ENCODE measurements at regions of chr9 and their contacts with region 1.

Region 1: GRCh38 chr9:70639853-70640814 is 225.7 kb upstream of the KLF9 start:
- DNase-seq: peak; percentile 18
- H3K4me3 ChIP-seq: no peak overlapping the region
- H3K27ac ChIP-seq: no peak overlapping the region
- H3K27me3 ChIP-seq: peaks cover 5% of the 10 kb centered on the region
- CTCF ChIP-seq: peak; percentile 69

Region 2: DNA sequence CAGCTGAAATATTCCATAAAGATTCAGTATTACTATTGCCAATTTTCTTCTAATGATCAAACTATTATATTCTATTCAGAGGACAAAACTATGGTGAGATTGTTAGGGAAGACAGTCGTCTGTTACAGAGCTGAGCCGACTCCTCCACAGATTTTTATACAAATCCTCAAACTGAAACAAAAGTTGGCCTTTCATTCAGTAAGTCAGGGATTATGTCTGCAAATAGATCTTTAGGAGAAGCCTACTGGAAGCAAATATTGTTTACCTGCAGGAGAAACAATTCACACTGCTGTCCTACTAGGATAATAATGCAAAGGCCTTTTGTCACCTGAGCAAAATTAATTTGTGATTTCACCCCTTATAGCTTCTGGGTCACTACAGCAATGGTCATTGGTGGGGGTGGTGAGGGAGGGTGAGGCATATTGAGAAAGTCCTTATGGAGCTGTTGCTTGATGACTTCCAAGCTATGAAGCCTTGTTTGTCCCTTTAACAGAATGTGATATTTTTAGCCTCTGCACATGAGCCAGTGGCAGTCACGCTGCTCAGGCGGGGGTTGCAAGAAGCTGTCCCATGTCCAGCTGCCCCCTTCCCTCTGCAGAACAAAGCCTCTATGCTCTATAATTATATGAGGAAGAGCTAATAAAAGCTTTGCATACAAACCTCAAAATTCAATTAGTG is 25.2 kb before region 1 on chr9:
- CTCF ChIA-PET with region 1: interaction called, 13 read pairs
- POLR2A ChIA-PET with region 1: no interaction called
- DNase-seq: no peak
- H3K4me3 ChIP-seq: no peak overlapping the region
- H3K27ac ChIP-seq: no peak overlapping the region
- H3K27me3 ChIP-seq: no peaks in the 10 kb centered on the region
- CTCF ChIP-seq: no peak

Region 3: GRCh38 chr9:70656281-70656680 is 16.1 kb after region 1 on chr9:
- CTCF ChIA-PET with region 1: interaction called, 17 read pairs
- POLR2A ChIA-PET with region 1: no interaction called
- DNase-seq: no peak
- H3K4me3 ChIP-seq: no peak overlapping the region
- H3K27ac ChIP-seq: no peak overlapping the region
- H3K27me3 ChIP-seq: no peaks in the 10 kb centered on the region
- CTCF ChIP-seq: no peak

Region 4: DNA sequence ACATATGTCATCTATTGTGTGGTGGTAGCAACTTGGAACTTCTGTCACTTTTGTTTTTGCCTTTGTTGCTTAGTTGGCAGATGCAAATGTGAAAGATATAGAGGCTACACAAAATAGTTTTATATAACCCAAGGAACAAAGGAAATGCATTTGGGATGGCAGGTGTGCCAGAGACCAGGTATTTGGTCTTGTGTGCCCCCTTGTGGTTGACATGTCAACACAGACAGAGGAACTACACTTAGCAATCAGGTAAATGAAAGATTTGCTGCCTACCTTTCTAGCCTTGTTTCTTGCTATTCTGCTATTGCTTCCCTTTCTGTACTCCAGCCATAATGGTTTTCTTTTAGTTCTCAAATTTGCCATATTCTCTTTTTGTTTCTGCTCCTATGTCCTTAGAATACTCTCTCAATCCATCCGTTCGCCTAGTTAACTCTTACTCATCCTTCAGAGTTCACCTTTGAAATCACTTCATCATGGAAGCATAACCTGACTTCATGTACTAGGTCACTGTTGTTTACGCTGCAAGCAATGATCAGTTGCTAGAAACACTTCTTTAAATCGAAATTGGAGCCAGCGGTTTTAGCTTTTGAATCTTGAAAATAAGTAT is 361.7 kb after region 1 on chr9:
- CTCF ChIA-PET with region 1: interaction called, 24 read pairs
- POLR2A ChIA-PET with region 1: no interaction called
- DNase-seq: no peak
- H3K4me3 ChIP-seq: no peak overlapping the region
- H3K27ac ChIP-seq: no peak overlapping the region
- H3K27me3 ChIP-seq: no peaks in the 10 kb centered on the region
- CTCF ChIP-seq: peak; percentile 63

Region 5: GRCh38 chr9:71285191-71285656 is 645.1 kb after region 1 on chr9:
- CTCF ChIA-PET with region 1: interaction called, 28 read pairs
- POLR2A ChIA-PET with region 1: no interaction called
- DNase-seq: peak; percentile 33
- H3K4me3 ChIP-seq: no peak overlapping the region
- H3K27ac ChIP-seq: no peak overlapping the region
- H3K27me3 ChIP-seq: no peaks in the 10 kb centered on the region
- CTCF ChIP-seq: peak; percentile 92

Measured in AG04450 (cell line).